ENCODE measurements at regions of chr14 and their contacts with region 1.

Region 1: DNA sequence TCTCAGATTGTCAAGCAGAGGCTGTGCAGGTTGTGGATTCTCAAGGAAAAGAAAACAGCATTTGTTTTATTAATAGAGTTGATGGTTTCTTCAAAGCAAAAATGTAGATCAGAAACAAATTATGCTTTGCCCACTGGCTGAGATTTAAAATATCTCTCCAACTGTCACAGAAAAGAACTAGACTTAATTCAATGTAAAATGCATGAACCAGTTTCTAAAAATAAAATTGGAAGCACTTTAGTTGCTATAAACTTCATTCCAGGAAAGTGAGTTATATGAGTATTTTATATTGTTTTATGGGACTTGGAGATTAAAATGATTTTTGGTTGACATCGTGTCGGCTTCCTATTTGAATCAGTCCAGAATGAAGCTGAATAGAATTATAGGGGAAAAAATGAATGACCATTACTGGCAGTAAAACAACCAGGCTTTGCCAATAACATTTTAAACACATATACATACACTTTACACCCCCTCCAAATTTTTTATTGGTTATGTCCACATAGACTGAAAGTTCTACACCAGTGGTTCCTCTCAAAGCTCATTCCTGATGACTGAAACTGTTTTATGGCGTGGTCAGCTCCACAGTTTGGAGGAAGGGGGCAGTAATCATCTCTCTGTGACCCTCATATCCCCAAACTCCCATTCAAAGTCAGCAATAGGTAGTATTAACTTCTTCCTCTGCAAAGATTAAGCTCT is 55.5 kb upstream of the DAAM1 start:
- DNase-seq: no peak
- ATAC-seq: peak in 1 of 4 donors; percentile 61
- H3K4me3 ChIP-seq: no peak overlapping the region
- H3K27ac ChIP-seq: no peak overlapping the region
- H3K4me1 ChIP-seq: peaks cover 0 to 11% (median 0%) of the 10 kb centered on the region in 12 donors
- H3K27me3 ChIP-seq: no peaks in the 10 kb centered on the region
- CTCF ChIP-seq: peak in 5 of 12 donors; percentile 13 to 40 (median 18)
- POLR2A ChIP-seq: no peak

Region 2: DNA sequence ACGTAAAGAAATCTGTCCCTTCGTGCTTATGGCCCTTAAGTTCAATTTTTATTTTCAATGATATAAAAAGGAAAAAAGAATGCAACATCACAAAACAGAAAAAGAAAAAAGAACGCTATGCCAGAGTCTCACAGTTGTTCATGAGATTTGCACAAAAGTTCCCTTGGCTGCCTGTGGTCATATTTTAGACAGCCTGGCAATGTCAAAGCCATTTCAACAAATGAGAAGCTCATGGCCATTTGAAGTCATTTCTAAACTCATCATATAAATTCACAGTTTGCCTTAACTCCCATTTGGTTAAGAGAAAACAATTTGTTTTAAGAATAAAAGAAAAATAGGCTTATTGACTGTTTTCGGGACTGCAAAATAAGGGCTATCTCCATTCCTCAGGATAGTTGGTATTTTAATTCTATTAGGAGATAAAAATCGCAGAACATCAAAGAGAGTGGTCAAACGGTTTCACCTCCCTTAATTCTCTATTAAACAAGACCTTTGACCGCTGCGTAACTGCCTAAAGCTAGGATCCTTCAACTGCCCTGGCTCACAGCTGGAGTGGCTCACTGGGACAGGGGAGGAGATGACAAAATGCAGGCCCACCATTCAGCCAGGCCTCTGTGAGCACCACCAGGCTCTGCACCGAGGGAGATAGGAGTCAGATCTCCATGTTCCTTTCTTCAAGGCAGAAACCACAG is 63.6 kb before region 1 on chr14:
- intact Hi-C with region 1: no loop called
- DNase-seq: no peak
- ATAC-seq: no peak
- H3K4me3 ChIP-seq: no peak overlapping the region
- H3K27ac ChIP-seq: no peak overlapping the region
- H3K4me1 ChIP-seq: no peaks in the 10 kb centered on the region
- H3K27me3 ChIP-seq: peaks cover 0 to 4% (median 0%) of the 10 kb centered on the region in 9 donors
- CTCF ChIP-seq: no peak
- POLR2A ChIP-seq: no peak

Region 3: DNA sequence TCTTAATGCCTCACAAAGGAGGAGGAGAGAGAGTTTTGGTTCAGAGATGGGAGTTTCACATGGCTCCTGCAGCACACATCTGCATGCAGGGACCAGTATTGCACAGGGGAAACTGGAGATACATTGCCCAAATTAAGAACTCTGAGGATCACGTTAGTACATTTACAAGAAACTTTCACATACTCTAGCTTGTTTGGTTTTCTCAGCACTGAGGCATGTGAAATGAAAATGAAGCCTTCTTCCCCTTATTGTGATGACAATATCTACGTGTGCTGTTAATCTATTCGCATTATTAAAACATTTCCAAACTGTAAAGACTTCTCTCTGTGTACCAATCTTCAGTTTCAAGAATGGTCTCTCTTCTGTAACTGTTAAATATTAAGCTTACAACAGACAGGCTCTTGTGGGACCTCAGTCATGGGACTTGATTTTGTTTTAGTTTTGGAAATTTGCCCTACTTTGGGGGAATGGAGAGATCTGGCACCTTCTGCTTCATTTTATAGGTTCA is 180.3 kb after region 1 on chr14:
- intact Hi-C with region 1: loop called in 1 of 10 experiments (anchors 10 kb)
- DNase-seq: no peak
- ATAC-seq: no peak
- H3K4me3 ChIP-seq: no peak overlapping the region
- H3K27ac ChIP-seq: peak overlapping the region in 4 of 12 donors; percentile 21 to 43 (median 27)
- H3K4me1 ChIP-seq: peaks cover 0 to 81% (median 56%) of the 10 kb centered on the region in 12 donors
- H3K27me3 ChIP-seq: no peaks in the 10 kb centered on the region
- CTCF ChIP-seq: no peak
- POLR2A ChIP-seq: no peak